HCT116 (cell line): ENCODE measurements at regions of chr5 and their contacts with region 1.

Region 1: DNA sequence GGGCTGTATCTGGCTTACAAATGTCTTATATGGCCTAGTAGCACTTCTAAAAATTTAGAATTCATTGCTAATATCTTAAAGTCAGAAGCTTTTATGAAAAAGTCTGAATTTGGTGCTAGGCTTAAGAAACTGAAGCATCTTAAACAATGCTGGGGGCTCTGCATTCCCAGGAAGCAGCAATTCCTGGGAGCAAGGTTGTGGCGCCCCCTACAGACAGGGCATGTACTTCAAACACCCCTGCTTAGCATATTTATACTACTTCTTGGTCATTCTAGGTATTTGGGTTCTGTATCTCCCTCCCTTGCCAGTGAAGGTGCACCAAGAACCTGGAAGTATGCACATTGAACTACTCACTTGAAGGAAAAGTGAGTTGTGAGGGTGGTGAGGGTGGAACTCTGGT is 64.6 kb upstream of the GRIA1 start:
- DNase-seq: peak; percentile 6
- ATAC-seq: no peak
- H3K4me3 ChIP-seq: no peak overlapping the region
- H3K27ac ChIP-seq: no peak overlapping the region
- H3K4me1 ChIP-seq: no peaks in the 10 kb centered on the region
- H3K27me3 ChIP-seq: peaks cover 10% of the 10 kb centered on the region
- CTCF ChIP-seq: peak; percentile 18 to 76 (median 59); a peak in 5 of 6 replicates
- POLR2A ChIP-seq: no peak
- RAD21 ChIP-seq: peak; percentile 58

Region 2: DNA sequence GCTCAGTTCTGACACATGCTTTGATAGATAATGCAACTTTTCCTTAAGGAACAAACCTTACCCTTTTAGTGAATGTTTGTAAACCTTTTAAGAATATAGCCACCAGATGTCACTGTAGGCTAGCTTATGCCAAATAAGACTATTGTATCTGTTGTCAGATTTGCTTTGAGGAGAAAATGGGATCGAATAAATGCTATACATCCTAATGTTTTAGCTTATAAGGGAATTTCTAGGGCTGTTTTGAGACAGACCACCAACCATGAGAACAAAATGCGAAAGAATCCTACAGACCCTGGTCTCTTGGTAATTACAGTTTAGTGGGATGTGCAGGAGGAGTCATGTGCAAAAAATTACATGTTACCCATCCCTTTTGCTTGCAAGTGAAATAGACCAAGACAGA is 893.2 kb before region 1 on chr5:
- CTCF ChIA-PET with region 1: no interaction called
- POLR2A ChIA-PET with region 1: no interaction called
- RAD21 ChIA-PET with region 1: no interaction called
- intact Hi-C with region 1: loop called (anchors 10 kb)
- DNase-seq: peak; percentile 42
- ATAC-seq: peak; percentile 64
- H3K4me3 ChIP-seq: no peak overlapping the region
- H3K27ac ChIP-seq: no peak overlapping the region
- H3K4me1 ChIP-seq: no peaks in the 10 kb centered on the region
- H3K27me3 ChIP-seq: peaks cover 7% of the 10 kb centered on the region; the same call in 1 of the 2 replicates
- CTCF ChIP-seq: peak in 2 of 3 experiments; percentile 57 to 63; a peak in 3 of 6 replicates
- POLR2A ChIP-seq: no peak
- RAD21 ChIP-seq: peak; percentile 78

Region 3: DNA sequence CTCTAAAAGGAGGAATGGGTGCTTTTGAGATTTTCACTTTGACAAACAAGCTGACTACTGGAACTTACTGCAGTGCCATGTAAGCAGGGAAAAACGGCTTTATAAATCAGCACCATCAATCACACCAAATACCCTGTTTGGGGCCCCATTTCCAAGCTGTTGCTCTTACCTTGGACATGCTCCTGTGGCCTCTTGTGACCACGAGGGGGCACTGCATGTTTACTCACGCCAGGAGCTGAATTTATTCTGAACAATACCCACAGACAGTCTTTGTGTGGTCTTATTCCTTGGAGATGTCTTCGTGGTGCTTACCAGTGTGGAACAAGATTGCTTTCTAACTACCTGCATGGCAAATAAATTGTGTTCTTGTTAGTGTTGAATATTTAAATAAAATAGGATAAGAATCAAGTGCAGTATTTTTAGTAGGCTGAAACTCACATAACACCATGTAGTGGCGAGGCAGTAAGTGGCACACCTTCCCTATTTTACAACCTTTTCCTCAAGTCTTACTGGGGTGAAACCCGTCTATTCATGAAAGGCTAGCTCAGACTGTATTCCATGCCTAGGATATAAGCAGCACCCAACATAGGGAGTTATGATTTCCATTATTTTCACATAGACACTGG is 865.3 kb before region 1 on chr5:
- CTCF ChIA-PET with region 1: no interaction called
- POLR2A ChIA-PET with region 1: no interaction called
- RAD21 ChIA-PET with region 1: no interaction called
- intact Hi-C with region 1: loop called (anchors 1 kb)
- DNase-seq: peak; percentile 18
- ATAC-seq: peak; percentile 63
- H3K4me3 ChIP-seq: no peak overlapping the region
- H3K27ac ChIP-seq: no peak overlapping the region
- H3K4me1 ChIP-seq: no peaks in the 10 kb centered on the region
- H3K27me3 ChIP-seq: no peaks in the 10 kb centered on the region
- CTCF ChIP-seq: peak; percentile 16 to 78 (median 66); a peak in 4 of 6 replicates
- POLR2A ChIP-seq: no peak
- RAD21 ChIP-seq: peak; percentile 59